Lower lobe of right lung (tissue), 2 donors: ENCODE measurements at regions of chrX and their contacts with region 1.

Region 1: DNA sequence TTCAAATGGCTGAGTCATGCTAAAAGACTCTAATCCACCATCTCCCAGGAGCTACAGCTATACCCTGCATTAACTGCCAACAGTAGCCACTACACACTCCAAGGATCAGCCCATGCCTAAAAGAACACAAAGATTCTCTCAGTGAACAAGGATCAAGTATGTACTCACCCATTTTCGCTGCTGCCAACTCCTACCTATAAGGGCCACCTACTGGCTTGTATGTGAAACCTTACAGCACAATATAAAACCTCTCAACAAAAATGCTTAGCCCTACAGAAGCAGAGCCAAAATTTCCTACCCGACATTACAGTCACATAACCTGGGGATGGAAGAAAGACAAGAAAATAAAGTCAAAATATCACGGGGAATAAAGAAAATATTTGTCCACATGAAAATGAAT is 562.8 kb upstream of the POU3F4 start:
- DNase-seq: no peak
- ATAC-seq: no peak
- H3K4me3 ChIP-seq: no peak overlapping the region
- H3K27ac ChIP-seq: no peak overlapping the region
- H3K4me1 ChIP-seq: no peaks in the 10 kb centered on the region
- H3K27me3 ChIP-seq: no peaks in the 10 kb centered on the region
- CTCF ChIP-seq: no peak

Region 2: DNA sequence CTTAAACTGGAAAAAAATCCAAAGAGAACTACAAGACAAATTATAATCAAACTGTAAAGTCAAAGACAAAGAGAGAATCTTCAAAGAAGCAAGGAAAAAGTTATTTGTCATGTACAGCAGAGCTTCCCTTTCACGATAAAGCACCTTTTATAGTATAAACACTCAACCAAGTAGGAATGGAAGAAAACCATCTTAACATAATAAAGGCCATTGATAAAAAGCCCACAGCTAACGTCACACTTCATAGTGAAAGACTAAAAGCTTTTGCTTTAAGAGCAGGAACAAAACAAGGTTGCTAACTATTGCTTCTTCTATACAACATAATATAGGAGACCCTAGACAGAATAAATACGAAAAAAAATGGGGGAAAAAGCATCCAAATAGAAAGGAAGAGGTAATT is 32.9 kb before region 1 on chrX:
- intact Hi-C with region 1: loop called (anchors 5 kb)
- DNase-seq: no peak
- ATAC-seq: no peak
- H3K4me3 ChIP-seq: no peak overlapping the region
- H3K27ac ChIP-seq: no peak overlapping the region
- H3K4me1 ChIP-seq: no peaks in the 10 kb centered on the region
- H3K27me3 ChIP-seq: no peaks in the 10 kb centered on the region
- CTCF ChIP-seq: no peak